AG04449 (cell line): ENCODE measurements at regions of chr6 and their contacts with region 1.

Region 1: DNA sequence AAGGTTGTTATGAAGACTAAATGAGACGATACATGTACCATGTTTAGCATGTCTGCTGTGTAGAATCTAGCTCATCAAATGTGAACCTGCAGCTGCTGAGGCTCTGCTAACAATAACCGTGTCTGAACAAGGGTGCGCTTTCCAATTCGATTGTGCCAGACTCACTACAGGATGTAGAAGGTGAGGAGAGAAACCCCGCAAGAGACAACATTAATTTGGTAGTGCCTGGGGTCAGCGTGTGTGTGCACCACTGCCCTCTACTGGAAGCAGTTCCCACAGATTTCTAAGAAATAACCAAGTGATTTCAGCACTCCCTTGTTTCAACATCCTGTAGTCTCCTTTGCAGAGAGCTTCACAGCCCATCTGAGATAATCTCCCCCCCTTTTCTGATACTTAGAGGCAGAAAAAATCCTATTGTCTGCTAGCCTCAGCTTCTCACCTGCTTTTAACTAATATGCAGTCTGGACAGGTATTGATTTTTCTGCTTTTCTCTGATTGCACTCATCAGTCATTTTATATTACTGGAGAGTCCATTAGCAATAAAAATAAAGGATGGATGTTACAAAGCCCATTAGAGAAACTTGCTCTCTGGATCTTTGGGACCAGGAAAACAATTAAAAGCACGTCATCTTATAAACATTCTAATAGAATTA is 96.7 kb upstream of the BACH2 start:
- DNase-seq: no peak
- H3K4me3 ChIP-seq: no peak overlapping the region
- CTCF ChIP-seq: peak; percentile 72

Region 2: DNA sequence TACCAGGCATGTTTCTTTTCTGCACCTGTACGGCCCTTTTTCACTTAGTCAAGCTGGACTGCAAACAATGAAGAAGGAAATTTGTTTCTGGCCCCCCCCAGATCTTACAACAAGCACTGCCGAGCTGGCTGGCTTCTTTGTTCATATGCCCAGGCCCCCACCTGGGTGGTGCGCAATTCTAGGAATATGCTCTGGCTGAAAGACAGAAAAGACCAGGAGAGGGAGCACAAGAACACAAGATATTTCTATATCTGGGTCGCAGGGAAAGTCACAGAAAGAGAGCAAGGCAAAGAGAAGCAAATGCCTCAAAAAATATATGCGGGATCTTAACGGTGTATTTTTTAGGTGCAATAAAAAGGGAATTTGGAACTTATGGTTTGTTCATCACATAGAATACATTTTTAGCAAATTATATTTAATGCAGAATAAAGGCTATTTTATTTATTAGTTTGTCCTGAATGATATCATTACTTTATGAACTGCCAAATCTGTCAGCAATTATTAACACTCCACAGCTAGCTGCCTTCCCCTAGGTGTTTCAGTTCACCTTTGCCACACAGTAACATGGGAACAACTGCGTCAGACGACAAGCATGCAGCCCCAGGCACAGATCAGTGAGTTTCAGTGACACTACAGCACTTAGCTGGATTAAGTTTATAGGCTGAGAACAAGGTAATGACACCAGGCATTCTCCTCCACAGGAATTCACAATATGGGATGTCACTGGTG is 422.6 kb before region 1 on chr6:
- CTCF ChIA-PET with region 1: interaction called, 27 read pairs
- POLR2A ChIA-PET with region 1: no interaction called
- DNase-seq: no peak
- H3K4me3 ChIP-seq: no peak overlapping the region
- CTCF ChIP-seq: peak; percentile 58

Region 3: DNA sequence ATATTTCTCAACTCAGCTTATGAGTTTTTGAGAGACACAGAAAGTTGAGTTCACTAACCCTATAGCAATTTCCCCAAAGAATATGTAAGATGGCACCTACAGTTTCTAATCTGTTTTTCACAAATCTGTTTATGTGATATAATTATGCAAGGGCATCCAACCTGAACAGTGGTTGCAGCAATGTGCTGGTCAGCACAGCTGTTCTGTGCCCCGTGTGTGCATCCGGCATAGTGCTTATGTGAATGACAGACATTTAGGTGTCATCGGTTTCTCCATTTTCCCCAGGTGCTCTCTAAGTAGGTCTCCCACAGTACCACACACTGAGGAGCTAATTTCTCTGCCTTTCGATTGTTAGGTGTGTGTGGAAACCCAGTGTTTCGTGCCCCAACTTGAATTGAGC is 89.0 kb before region 1 on chr6:
- CTCF ChIA-PET with region 1: interaction called, 12 read pairs
- POLR2A ChIA-PET with region 1: no interaction called
- DNase-seq: no peak
- H3K4me3 ChIP-seq: no peak overlapping the region
- CTCF ChIP-seq: no peak

Region 4: DNA sequence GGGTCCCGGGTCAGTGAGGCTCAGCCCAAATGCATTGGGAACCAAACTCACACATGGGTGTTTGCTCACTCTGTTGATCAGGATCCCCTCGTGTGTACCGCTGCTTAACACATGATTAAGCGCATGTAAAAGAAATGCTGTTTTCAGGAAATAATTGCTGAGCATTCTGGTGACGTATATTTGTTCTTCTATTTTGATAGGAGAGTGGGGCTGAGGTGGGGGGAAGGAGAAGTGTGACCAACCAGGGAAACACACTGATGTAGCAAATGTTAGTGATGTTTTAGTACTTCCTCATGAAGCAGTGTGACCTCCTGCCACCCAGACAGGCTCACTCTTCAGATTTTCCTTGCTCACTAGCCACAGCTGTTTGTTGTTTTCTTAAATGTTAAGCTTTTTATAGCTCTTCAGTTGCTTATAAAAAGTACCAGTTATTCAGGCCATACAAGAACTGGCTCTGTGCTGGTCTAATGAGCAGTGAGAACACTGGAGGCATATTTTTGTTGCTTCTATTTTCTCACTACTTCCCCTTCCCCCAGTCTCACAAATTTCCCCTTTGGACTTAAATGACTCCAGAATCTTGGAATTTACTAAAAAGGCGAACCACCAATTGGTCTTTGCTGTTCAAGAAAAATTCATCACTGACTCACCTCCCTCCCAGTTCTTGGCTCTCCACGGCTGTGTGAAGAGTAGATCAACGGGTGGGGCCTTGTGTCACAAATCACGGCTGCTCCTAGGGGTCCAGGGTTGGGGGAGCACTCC is 17.5 kb before region 1 on chr6:
- CTCF ChIA-PET with region 1: interaction called, 37 read pairs
- POLR2A ChIA-PET with region 1: no interaction called
- DNase-seq: peak; percentile 59
- H3K4me3 ChIP-seq: no peak overlapping the region
- CTCF ChIP-seq: no peak

Region 5: DNA sequence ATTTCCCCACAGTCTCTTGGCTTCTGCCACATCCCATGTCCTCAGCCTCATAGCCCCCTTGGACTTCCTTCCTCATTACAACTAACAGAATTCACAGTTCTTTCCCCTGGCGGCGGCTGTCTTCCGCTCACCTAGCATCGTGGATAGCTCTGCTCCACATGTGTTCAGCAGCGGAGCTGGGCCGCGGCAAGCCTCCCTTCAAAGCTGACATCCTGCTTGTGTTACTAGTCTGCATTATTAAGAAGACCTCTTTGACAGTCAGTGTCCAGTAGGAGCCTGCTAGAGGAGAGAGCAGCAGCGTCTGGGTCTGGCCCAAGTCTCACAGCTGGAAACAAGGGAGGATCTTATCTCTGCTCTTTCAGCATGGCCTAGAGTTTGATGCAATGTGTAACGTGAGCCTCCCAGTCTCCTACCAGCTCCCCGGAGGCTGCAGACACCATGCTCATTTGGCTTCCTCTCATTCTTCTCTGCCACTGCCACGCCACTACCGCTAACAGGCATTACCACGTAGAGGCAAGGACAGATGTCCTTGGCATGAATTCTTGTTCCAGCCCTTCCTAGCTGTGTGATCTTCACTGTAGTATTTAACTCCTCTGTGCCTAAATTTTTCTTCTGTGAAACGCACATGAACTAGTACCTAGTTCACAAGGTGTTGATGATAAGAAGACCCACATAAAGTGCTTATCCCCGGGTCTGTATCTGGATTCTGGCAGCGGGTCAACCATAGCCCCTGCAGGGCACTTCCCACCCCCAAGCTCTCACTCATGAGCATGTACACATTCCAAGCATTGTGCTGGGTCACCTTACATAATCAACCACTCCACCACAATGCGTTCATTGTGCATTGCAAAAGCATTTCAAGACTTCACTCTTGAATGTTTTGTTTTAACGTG is 10.4 kb after region 1 on chr6:
- CTCF ChIA-PET with region 1: interaction called, 41 read pairs
- POLR2A ChIA-PET with region 1: no interaction called
- DNase-seq: peak; percentile 19
- H3K4me3 ChIP-seq: no peak overlapping the region
- CTCF ChIP-seq: no peak

Region 6: DNA sequence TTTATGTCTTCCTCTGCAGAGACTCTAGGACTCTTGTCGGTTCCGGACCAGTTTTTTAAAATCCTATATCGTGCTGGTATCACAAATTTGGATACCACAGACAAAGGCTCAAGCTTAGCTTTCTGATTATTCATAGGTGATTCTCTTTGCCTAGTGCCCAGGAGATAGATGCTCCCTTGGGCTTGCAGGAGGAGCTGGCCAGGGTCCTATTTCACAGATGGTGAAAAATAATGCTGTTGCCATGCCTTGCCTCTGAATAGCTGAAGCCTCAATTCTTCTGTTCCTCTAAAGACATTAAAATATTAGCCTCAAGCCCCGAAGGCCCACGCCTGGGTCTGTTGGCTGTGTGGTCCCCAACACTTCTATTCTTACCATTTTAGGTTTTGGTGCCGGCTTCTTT is 27.1 kb after region 1 on chr6:
- CTCF ChIA-PET with region 1: interaction called, 28 read pairs
- POLR2A ChIA-PET with region 1: no interaction called
- DNase-seq: no peak
- H3K4me3 ChIP-seq: no peak overlapping the region
- CTCF ChIP-seq: no peak